ENCODE measurements at regions of chr17 and their contacts with region 1.

Region 1: DNA sequence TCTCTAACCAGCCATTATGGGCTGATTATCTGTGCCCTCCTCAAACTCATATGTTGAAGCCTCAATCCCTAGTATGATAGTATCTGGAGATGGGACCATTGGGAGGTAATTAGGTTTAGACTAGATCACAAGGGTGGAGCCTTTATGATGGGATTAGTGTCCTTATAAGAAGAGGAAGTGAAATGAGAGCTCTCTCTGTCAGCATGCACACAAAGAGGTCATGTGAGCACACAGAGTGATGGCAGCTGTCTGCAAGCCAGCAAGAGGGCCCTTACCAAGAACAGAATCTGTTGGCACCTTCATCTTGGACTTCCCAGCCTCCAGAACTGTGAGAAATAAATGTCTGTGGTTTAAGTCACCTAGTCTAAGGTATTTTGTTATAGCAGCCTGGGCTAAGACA is 101.9 kb downstream of the PCTP start:
- ATAC-seq: no peak
- H3K4me3 ChIP-seq: no peak overlapping the region
- H3K27ac ChIP-seq: no peak overlapping the region
- H3K4me1 ChIP-seq: no peaks in the 10 kb centered on the region

Region 2: GRCh38 chr17:55334285-55334684 is 518.4 kb before region 1 on chr17:
- in situ Hi-C with region 1: no loop called
- ATAC-seq: peak in 4 of 8 experiments; percentile 26 to 85 (median 44)
- H3K4me3 ChIP-seq: no peak overlapping the region
- H3K27ac ChIP-seq: no peak overlapping the region
- H3K4me1 ChIP-seq: no peaks in the 10 kb centered on the region

Region 3: GRCh38 chr17:55735731-55736405 is 116.9 kb before region 1 on chr17:
- in situ Hi-C with region 1: no loop called
- ATAC-seq: no peak
- H3K4me3 ChIP-seq: no peak overlapping the region
- H3K27ac ChIP-seq: no peak overlapping the region
- H3K4me1 ChIP-seq: peaks cover 23 to 24% of the 10 kb centered on the region in 2 donors

Region 4: GRCh38 chr17:56325313-56326000 is 472.7 kb after region 1 on chr17:
- in situ Hi-C with region 1: loop called in 1 of 9 experiments (anchors 25 kb)
- ATAC-seq: peak; percentile 63 to 94 (median 86)
- H3K4me3 ChIP-seq: peak overlapping the region in 3 of 5 donors; percentile 2 to 12 (median 8)
- H3K27ac ChIP-seq: peak overlapping the region; percentile 44 to 54
- H3K4me1 ChIP-seq: peaks cover 30% of the 10 kb centered on the region in 2 donors

Measured in motor neuron (in vitro differentiated cells).